ENCODE measurements at regions of chr2 and their contacts with region 1.

Region 1: GRCh38 chr2:24075915-24076848 is at the start of gene SF3B6:
- DNase-seq: peak; percentile 97 to 100 (median 100)
- ATAC-seq: peak; percentile 89
- H3K4me3 ChIP-seq: peak within 1 kb of the TSS; percentile 97
- H3K4me3 Mint-ChIP-seq: peak within 1 kb of the TSS; percentile 93 to 99 (median 98)
- H3K27ac ChIP-seq: peak within 1 kb of the TSS; percentile 78
- H3K27ac Mint-ChIP-seq: peak within 1 kb of the TSS; percentile 96 to 99 (median 99)
- H3K4me1 ChIP-seq: peaks cover 13 to 21% of the 10 kb centered on the region in 2 donors
- H3K4me1 Mint-ChIP-seq: peaks cover 14 to 47% (median 42%) of the 10 kb centered on the region in 7 donors
- H3K27me3 ChIP-seq: no peaks in the 10 kb centered on the region
- H3K27me3 Mint-ChIP-seq: no peaks in the 10 kb centered on the region
- total RNA-seq, gene SF3B6: 42.4 to 100 (median 49.7) TPM

Region 2: GRCh38 chr2:23249348-23249747 is 826.8 kb before region 1 on chr2:
- CTCF ChIA-PET with region 1: no interaction called
- POLR2A ChIA-PET with region 1: no interaction called
- intact Hi-C with region 1: no loop called
- DNase-seq: no peak
- ATAC-seq: no peak
- H3K4me3 ChIP-seq: no peak overlapping the region
- H3K4me3 Mint-ChIP-seq: no peak overlapping the region
- H3K27ac ChIP-seq: no peak overlapping the region
- H3K27ac Mint-ChIP-seq: no peak overlapping the region
- H3K4me1 ChIP-seq: no peaks in the 10 kb centered on the region
- H3K4me1 Mint-ChIP-seq: peaks cover 0 to 2% (median 0%) of the 10 kb centered on the region in 7 donors
- H3K27me3 ChIP-seq: no peaks in the 10 kb centered on the region
- H3K27me3 Mint-ChIP-seq: peaks cover 13 to 45% (median 30%) of the 10 kb centered on the region in 5 donors

Region 3: GRCh38 chr2:23384551-23385349 is 691.4 kb before region 1 on chr2 and contains the start of gene KLHL29:
- CTCF ChIA-PET with region 1: no interaction called
- POLR2A ChIA-PET with region 1: no interaction called
- intact Hi-C with region 1: loop called (anchors 2 to 5 kb)
- DNase-seq: peak; percentile 56 to 79 (median 72)
- ATAC-seq: peak; percentile 88
- H3K4me3 ChIP-seq: peak within 1 kb of the TSS; percentile 46
- H3K4me3 Mint-ChIP-seq: peak within 1 kb of the TSS; percentile 85 to 97 (median 90)
- H3K27ac ChIP-seq: no peak within 1 kb of the TSS
- H3K27ac Mint-ChIP-seq: peak within 1 kb of the TSS in 8 of 9 donors; percentile 76 to 96 (median 84)
- H3K4me1 ChIP-seq: peaks cover 0 to 24% of the 10 kb centered on the region in 2 donors
- H3K4me1 Mint-ChIP-seq: peaks cover 17 to 41% (median 35%) of the 10 kb centered on the region in 7 donors
- H3K27me3 ChIP-seq: peaks cover 0 to 2% of the 10 kb centered on the region in 2 donors
- H3K27me3 Mint-ChIP-seq: peaks cover 23 to 77% (median 40%) of the 10 kb centered on the region in 5 donors
- total RNA-seq, gene KLHL29: 5.4 to 6.5 (median 6.2) TPM

Region 4: DNA sequence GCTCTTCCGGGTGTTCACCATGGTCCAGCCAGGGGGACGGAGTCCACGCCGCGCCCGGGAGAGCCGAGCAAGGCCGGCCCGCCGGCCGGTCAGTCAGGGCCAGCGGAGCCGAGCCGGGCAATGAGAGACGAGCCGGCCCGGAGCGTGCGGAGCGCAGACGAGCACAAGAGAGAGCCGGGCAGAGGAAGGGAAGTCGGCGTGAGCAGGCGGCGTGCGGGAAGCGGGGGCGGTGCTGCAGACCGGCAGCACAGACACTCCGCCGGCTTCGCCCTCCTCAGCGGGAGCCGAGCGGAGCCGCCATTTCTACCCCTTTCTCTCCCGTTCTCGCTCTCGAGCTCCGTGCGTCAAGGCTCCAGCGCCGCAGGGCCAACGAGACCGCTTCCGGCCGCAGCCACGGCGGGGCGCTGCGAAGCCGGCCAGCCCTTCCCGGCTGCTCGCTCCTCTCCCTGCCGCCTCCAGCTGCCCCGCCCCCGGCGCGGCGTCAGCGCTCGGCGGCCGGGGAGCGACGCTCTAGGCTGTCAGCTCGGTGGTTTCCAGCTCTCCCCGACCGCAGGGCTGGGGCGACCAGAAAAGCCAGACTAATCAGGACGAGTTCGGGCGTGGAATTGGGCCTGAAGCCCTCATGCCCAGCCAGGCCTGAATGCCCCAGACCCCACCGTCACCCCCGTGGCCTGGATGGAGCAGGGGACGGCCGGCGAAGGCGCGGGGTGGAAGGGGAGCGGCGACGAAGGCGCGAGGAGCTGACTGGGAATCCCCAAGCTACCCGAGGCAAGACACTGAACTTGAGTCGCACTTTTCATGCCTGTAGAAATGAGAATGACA is 149.2 kb before region 1 on chr2 and contains the start of gene ATAD2B:
- CTCF ChIA-PET with region 1: interaction called, 6 read pairs
- POLR2A ChIA-PET with region 1: interaction called, 49 read pairs
- intact Hi-C with region 1: loop called (anchors 1 kb)
- DNase-seq: peak; percentile 90 to 97 (median 95)
- ATAC-seq: peak; percentile 90
- H3K4me3 ChIP-seq: peak within 1 kb of the TSS; percentile 94
- H3K4me3 Mint-ChIP-seq: peak within 1 kb of the TSS; percentile 95 to 99 (median 98)
- H3K27ac ChIP-seq: peak within 1 kb of the TSS; percentile 97
- H3K27ac Mint-ChIP-seq: peak within 1 kb of the TSS; percentile 95 to 100 (median 99)
- H3K4me1 ChIP-seq: peaks cover 20 to 31% of the 10 kb centered on the region in 2 donors
- H3K4me1 Mint-ChIP-seq: peaks cover 34 to 57% (median 46%) of the 10 kb centered on the region in 7 donors
- H3K27me3 ChIP-seq: no peaks in the 10 kb centered on the region
- H3K27me3 Mint-ChIP-seq: peaks cover 0 to 4% (median 0%) of the 10 kb centered on the region in 5 donors
- total RNA-seq, gene ATAD2B: 31.8 to 55.8 (median 43.3) TPM

Region 5: DNA sequence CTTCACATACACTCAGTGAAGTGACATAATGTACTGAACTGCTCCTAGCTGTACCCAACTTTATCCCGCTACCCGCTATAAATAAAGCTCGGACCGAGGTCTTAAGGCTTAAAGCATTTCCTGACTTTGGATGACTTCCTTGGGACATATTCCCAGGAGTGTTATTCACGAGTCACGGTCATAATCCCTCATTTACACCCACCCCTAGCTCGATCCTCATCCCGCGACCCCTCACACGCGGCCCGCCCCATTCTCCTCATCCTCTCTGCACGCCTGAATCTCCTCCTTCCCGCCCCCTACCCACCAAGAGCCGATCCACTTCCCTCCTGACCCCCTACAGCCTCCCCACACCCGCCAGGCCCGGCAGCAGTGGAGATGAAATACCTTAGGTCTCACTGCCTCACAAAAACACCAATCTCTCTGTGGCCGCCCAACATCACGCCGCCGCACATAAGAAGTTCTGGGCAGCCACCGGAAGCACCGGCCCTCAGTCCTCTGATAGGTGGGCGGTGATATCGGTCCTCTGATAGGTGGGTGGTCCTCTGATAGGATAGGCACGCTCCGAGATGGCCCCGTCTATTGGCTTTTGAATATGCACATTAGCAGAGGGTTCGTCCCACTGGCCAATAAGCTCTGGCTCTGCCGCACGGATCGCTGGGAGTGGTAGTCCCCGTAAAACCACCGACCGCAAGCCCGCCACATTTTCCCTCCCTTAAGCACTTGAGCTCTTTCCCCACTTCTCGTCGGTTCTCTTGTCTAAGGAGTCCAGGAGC is 29.1 kb before region 1 on chr2 and contains the start of gene WDCP:
- CTCF ChIA-PET with region 1: interaction called, 8 read pairs
- POLR2A ChIA-PET with region 1: interaction called, 21 read pairs
- intact Hi-C with region 1: loop called (anchors 1 kb)
- DNase-seq: peak; percentile 67 to 95 (median 90)
- ATAC-seq: peak; percentile 100
- H3K4me3 ChIP-seq: peak within 1 kb of the TSS; percentile 81
- H3K4me3 Mint-ChIP-seq: peak within 1 kb of the TSS; percentile 86 to 99 (median 95)
- H3K27ac ChIP-seq: peak within 1 kb of the TSS; percentile 74
- H3K27ac Mint-ChIP-seq: peak within 1 kb of the TSS; percentile 73 to 96 (median 88)
- H3K4me1 ChIP-seq: peaks cover 0 to 4% of the 10 kb centered on the region in 2 donors
- H3K4me1 Mint-ChIP-seq: peaks cover 17 to 42% (median 35%) of the 10 kb centered on the region in 7 donors
- H3K27me3 ChIP-seq: peaks cover 0 to 8% of the 10 kb centered on the region in 2 donors
- H3K27me3 Mint-ChIP-seq: peaks cover 5 to 12% (median 9%) of the 10 kb centered on the region in 5 donors
- total RNA-seq, gene WDCP: 3.9 to 22.1 (median 17.8) TPM

Region 6: GRCh38 chr2:24315669-24316068 is 239.5 kb after region 1 on chr2:
- CTCF ChIA-PET with region 1: no interaction called
- POLR2A ChIA-PET with region 1: no interaction called
- intact Hi-C with region 1: no loop called
- DNase-seq: no peak
- ATAC-seq: peak; percentile 16
- H3K4me3 ChIP-seq: no peak overlapping the region
- H3K4me3 Mint-ChIP-seq: no peak overlapping the region
- H3K27ac ChIP-seq: no peak overlapping the region
- H3K27ac Mint-ChIP-seq: peak overlapping the region in 5 of 9 donors; percentile 1 to 69 (median 49)
- H3K4me1 ChIP-seq: no peaks in the 10 kb centered on the region
- H3K4me1 Mint-ChIP-seq: peaks cover 10 to 26% (median 19%) of the 10 kb centered on the region in 7 donors
- H3K27me3 ChIP-seq: no peaks in the 10 kb centered on the region
- H3K27me3 Mint-ChIP-seq: no peaks in the 10 kb centered on the region

Region 7: DNA sequence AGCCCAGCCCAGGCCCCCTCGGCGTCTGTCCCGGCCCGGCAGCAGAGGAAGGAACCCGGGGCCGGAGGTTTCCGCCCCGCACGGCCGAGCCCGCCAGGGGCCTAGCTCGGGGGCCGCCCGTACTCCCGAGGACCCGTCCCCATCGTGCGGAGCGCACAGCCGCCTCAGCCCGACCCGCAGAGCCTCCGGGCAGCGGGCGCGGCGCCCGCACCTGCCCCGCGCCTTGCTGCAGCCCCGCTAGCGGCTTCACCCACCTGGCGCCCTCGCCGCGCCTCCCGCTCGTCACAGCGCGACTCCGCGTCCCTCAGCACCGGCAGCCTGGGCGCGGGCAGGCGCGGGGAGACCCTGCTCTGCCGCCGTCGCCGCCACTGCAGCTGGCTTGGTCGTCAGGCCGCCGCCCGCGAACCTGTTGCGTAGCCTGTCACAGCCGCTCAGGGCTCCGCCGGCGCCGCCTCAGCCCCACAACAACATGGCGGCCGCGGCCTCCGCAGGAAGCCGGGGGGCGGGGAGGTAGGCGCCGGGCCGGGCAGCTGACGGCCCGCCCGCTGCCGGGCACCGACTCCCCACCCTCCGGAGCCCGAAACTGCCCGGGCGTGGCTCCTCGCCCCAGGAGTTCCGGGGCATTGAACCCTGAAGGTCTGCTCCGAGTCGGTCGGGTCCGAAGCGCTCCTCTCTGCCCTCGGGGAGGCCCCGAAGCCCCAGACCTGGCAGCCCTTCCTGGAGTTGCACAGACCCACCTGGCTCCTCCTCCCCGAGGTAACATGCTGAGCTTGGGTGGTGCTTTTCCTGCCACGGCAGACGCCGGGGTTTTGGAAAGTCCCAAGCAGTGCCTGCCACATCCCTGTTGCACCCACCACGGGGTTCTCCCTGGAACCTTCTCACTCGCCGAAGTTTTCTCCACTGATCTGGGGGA is 284.1 kb after region 1 on chr2 and contains the start of gene ITSN2:
- CTCF ChIA-PET with region 1: no interaction called
- POLR2A ChIA-PET with region 1: interaction called, 3 read pairs
- intact Hi-C with region 1: loop called (anchors 1 to 2 kb)
- DNase-seq: peak; percentile 76 to 88 (median 83)
- ATAC-seq: peak; percentile 92
- H3K4me3 ChIP-seq: peak within 1 kb of the TSS; percentile 77
- H3K4me3 Mint-ChIP-seq: peak within 1 kb of the TSS; percentile 88 to 98 (median 92)
- H3K27ac ChIP-seq: peak within 1 kb of the TSS; percentile 99
- H3K27ac Mint-ChIP-seq: peak within 1 kb of the TSS; percentile 91 to 97 (median 95)
- H3K4me1 ChIP-seq: peaks cover 1 to 16% of the 10 kb centered on the region in 2 donors
- H3K4me1 Mint-ChIP-seq: peaks cover 22 to 44% (median 31%) of the 10 kb centered on the region in 7 donors
- H3K27me3 ChIP-seq: no peaks in the 10 kb centered on the region
- H3K27me3 Mint-ChIP-seq: peaks cover 0 to 3% (median 0%) of the 10 kb centered on the region in 5 donors
- total RNA-seq, gene ITSN2: 79.2 to 133 (median 106) TPM

Region 8: GRCh38 chr2:24792874-24793760 is 716.9 kb after region 1 on chr2 and contains the starts of genes CENPO and PTRHD1:
- CTCF ChIA-PET with region 1: no interaction called
- POLR2A ChIA-PET with region 1: interaction called, 3 read pairs
- intact Hi-C with region 1: loop called in 1 of 2 experiments (anchors 1 kb)
- DNase-seq: peak; percentile 93 to 99 (median 97)
- ATAC-seq: peak; percentile 98
- H3K4me3 ChIP-seq: peak within 1 kb of the TSS; percentile 97
- H3K4me3 Mint-ChIP-seq: peak within 1 kb of the TSS; percentile 95 to 100 (median 98)
- H3K27ac ChIP-seq: peak within 1 kb of the TSS; percentile 96
- H3K27ac Mint-ChIP-seq: peak within 1 kb of the TSS; percentile 99 to 100 (median 99)
- H3K4me1 ChIP-seq: peaks cover 6 to 10% of the 10 kb centered on the region in 2 donors
- H3K4me1 Mint-ChIP-seq: peaks cover 5 to 53% (median 20%) of the 10 kb centered on the region in 7 donors
- H3K27me3 ChIP-seq: no peaks in the 10 kb centered on the region
- H3K27me3 Mint-ChIP-seq: no peaks in the 10 kb centered on the region
- total RNA-seq, gene CENPO: 3.6 to 36.6 (median 6.0) TPM
- total RNA-seq, gene PTRHD1: 14.3 to 31.5 (median 17.1) TPM

Region 9: DNA sequence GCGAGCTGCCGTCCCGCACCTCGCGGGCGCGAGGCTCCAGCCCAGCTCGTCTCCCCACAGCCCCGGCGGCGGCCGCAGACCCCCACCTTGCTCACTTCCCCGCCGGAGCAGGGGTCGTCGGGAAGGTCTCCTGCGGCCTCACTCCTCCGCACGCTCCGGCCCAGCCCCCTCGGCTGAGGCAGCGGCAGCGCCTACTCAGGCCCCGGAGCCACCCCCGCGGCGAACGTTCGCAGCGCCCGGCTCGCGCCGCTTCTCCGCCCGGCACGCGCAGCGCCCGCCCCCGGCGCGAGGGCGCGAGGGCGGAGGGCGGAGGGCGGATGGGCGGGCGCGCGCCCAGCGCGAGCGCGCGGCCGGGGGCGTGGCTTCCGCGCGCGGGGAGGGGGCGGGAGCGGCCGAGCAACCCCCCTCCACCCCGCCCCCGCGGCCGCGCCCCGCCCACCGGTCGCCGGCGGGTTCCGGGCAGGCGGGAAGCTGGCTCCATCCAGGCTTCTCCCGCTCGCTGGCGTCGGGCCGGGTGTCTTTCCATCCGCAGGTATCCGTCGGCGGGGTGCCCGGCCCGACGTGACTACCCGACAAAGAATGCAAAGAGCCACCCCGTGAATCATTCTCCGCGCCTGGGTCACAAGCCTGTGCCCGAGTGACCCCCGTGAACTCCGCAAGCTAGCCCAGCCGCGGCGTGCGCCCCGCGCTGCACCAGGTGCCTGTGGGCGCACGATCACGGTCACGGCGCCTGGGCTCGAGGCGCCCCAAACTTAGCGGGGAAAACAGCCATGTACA is 1597.3 kb after region 1 on chr2 and contains the start of gene DTNB:
- CTCF ChIA-PET with region 1: no interaction called
- POLR2A ChIA-PET with region 1: no interaction called
- intact Hi-C with region 1: loop called in 1 of 2 experiments (anchors 5 kb)
- DNase-seq: peak; percentile 68 to 82 (median 79)
- ATAC-seq: peak; percentile 89
- H3K4me3 ChIP-seq: peak within 1 kb of the TSS; percentile 94
- H3K4me3 Mint-ChIP-seq: peak within 1 kb of the TSS; percentile 84 to 90 (median 88)
- H3K27ac ChIP-seq: peak within 1 kb of the TSS; percentile 80
- H3K27ac Mint-ChIP-seq: peak within 1 kb of the TSS; percentile 74 to 92 (median 84)
- H3K4me1 ChIP-seq: peaks cover 12 to 15% of the 10 kb centered on the region in 2 donors
- H3K4me1 Mint-ChIP-seq: peaks cover 15 to 56% (median 37%) of the 10 kb centered on the region in 7 donors
- H3K27me3 ChIP-seq: no peaks in the 10 kb centered on the region
- H3K27me3 Mint-ChIP-seq: peaks cover 0 to 25% (median 0%) of the 10 kb centered on the region in 5 donors
- total RNA-seq, gene DTNB: 32.8 to 56.2 (median 33.8) TPM

Measured in naive thymus-derived CD4-positive, alpha-beta T cell (primary cell).